GM12878 (cell line): ENCODE measurements at regions of chr21 and their contacts with region 1.

Region 1: DNA sequence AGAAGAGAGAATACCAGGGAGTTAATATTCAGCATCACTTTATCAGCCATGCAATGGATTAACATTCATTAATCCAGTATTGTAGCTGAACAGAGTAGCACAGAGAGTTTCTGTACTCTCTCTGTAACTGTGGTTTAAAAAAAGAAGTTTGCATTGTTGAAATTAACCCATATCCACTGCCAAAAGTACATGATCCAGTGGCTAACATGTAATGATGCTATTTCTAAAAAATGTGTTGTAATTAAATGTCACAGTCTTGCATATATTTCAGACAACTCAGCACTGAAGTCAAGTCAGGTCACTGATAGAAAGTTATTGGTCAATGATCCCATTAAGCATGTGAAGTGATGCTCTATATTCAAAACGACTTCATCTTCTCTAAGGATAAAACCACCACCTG is 141.3 kb downstream of the NRIP1 start:
- DNase-seq: no peak
- ATAC-seq: no peak
- H3K4me3 ChIP-seq: no peak overlapping the region
- H3K27ac ChIP-seq: no peak overlapping the region
- H3K4me1 ChIP-seq: no peaks in the 10 kb centered on the region
- H3K27me3 ChIP-seq: no peaks in the 10 kb centered on the region
- CTCF ChIP-seq: no peak
- EP300 ChIP-seq: no peak
- POLR2A ChIP-seq: no peak
- RAD21 ChIP-seq: no peak

Region 2: DNA sequence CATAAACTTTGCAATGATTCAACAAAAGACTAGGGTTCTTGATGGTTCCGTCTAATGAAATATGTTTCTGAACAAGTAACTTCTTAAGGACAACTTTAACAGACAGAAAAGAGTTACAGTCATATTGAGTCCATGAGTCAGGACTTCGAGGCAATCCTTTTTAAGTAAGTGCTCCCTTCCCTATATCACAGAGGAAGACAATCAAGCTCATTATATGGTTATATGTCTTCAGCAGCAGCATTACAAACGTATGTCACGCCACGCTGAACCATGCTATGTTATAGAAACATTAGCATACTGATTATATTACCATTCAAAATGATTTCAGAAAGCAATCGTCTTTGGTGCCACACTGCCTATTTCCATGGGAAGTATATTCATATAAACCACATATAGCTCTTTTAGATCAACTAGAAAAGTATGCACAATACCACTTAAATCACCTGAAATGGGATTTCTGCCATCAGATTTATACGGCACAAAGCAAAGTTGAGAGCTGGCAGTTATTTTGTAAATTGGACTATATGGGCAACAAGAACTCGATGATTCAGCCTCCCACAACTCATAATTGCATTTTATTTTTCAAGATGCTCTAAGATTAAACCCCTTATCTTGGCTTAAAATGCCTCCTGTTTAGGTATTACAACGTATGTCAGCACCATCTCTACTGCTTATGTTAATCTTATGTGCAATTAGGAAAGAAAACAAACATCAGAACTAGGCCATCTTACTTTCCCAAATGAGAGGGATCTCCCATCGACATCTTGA is 266.0 kb before region 1 on chr21:
- CTCF ChIA-PET with region 1: no interaction called
- POLR2A ChIA-PET with region 1: no interaction called
- RAD21 ChIA-PET with region 1: no interaction called
- SMC1A ChIA-PET with region 1: no interaction called
- in situ Hi-C with region 1: no loop called
- intact Hi-C with region 1: no loop called
- DNase-seq: no peak
- ATAC-seq: no peak
- H3K4me3 ChIP-seq: no peak overlapping the region
- H3K27ac ChIP-seq: no peak overlapping the region
- H3K4me1 ChIP-seq: no peaks in the 10 kb centered on the region
- H3K27me3 ChIP-seq: no peaks in the 10 kb centered on the region
- CTCF ChIP-seq: no peak
- EP300 ChIP-seq: no peak
- POLR2A ChIP-seq: no peak
- RAD21 ChIP-seq: no peak

Region 3: GRCh38 chr21:14972678-14973077 is 49.2 kb after region 1 on chr21:
- CTCF ChIA-PET with region 1: no interaction called
- POLR2A ChIA-PET with region 1: no interaction called
- RAD21 ChIA-PET with region 1: no interaction called
- SMC1A ChIA-PET with region 1: no interaction called
- in situ Hi-C with region 1: loop called (anchors 5 kb)
- intact Hi-C with region 1: no loop called
- DNase-seq: no peak
- ATAC-seq: no peak
- H3K4me3 ChIP-seq: no peak overlapping the region
- H3K27ac ChIP-seq: no peak overlapping the region
- H3K4me1 ChIP-seq: no peaks in the 10 kb centered on the region
- H3K27me3 ChIP-seq: no peaks in the 10 kb centered on the region
- CTCF ChIP-seq: no peak
- EP300 ChIP-seq: no peak
- POLR2A ChIP-seq: no peak
- RAD21 ChIP-seq: no peak